Activated B cell treated with CpG ODN at 0.5 μM for 24 hours (primary cell): ENCODE measurements at regions of chr14 and their contacts with region 1.

Region 1: GRCh38 chr14:95993768-95994592 is 45.2 kb upstream of the C14orf132 start:
- DNase-seq: no peak
- ATAC-seq: peak; percentile 37
- H3K4me3 Mint-ChIP-seq: no peak overlapping the region
- H3K27ac Mint-ChIP-seq: no peak overlapping the region
- H3K4me1 Mint-ChIP-seq: no peaks in the 10 kb centered on the region
- H3K27me3 Mint-ChIP-seq: peaks cover 24% of the 10 kb centered on the region
- CTCF ChIP-seq: peak; percentile 83

Region 2: DNA sequence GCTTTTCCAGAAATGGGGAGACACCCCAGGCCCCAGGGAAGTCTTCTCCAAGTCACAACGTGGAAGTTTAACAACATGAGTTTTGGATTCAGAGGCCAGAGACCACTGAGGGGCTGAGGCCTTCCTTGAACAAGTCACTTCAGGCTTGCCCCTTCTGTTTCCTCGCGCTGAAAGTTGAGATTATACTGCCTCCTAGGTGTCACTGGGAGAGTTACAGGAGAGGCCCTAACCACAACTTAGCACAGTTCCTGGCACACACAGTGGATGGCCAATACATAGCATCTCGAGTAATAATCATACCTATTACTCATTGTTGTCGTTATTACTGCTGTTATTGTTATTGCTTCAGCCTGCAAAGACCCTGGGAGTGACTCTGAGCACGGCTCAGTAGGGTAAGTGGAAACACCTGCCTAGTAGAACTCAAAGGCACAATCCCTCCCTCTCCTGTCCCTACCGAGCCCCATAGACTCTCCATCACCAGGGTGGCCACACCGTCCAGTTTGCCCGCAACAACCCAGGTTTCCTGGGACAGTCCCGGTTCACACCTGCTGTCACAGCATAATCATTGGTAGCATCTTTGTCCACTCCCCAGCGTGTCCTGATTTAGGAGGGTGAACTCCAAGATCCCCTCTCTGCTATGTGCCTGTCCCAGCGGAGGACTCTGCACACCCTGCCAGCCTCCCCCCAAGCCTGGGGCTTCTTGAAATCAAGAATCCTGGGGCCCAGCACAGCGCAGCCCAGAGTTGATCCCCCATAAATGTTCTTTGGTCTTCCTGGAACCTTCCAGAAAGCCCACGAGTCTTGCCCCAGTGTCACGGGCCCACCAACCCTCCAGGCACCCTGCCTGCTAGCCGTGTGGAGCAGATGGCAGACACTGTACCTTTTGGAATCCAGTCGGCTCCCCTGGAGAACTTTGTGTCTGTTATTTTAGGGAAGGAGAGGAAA is 562.5 kb before region 1 on chr14:
- CTCF ChIA-PET with region 1: interaction called, 4 read pairs
- POLR2A ChIA-PET with region 1: no interaction called
- intact Hi-C with region 1: loop called (anchors 1 kb)
- DNase-seq: no peak
- ATAC-seq: peak; percentile 65
- H3K4me3 Mint-ChIP-seq: no peak overlapping the region
- H3K27ac Mint-ChIP-seq: no peak overlapping the region
- H3K4me1 Mint-ChIP-seq: peaks cover 3% of the 10 kb centered on the region
- H3K27me3 Mint-ChIP-seq: no peaks in the 10 kb centered on the region
- CTCF ChIP-seq: no peak

Region 3: DNA sequence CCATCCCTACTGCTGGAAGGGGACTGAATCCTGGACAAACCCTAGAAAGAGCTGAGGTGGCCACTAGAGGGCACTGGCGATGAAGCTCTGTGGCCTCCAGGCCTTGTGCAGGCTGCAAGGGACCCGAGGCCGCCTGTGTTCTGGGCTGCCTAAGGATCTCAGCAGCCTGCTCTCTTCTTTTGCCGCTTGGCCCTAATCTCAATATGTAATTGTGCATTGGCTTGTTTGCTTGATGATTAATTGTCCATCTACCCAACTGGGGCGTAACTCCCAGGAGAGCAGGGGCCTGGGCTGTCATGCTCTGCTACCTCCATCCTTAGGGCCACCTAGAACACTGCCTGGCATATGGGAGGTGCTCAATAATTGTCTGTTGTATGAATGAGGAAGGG is 551.4 kb before region 1 on chr14:
- CTCF ChIA-PET with region 1: interaction called, 5 read pairs
- POLR2A ChIA-PET with region 1: no interaction called
- intact Hi-C with region 1: loop called (anchors 1 kb)
- DNase-seq: peak; percentile 55
- ATAC-seq: peak; percentile 91
- H3K4me3 Mint-ChIP-seq: no peak overlapping the region
- H3K27ac Mint-ChIP-seq: peak overlapping the region; percentile 78
- H3K4me1 Mint-ChIP-seq: peaks cover 34% of the 10 kb centered on the region
- H3K27me3 Mint-ChIP-seq: no peaks in the 10 kb centered on the region
- CTCF ChIP-seq: no peak

Region 4: DNA sequence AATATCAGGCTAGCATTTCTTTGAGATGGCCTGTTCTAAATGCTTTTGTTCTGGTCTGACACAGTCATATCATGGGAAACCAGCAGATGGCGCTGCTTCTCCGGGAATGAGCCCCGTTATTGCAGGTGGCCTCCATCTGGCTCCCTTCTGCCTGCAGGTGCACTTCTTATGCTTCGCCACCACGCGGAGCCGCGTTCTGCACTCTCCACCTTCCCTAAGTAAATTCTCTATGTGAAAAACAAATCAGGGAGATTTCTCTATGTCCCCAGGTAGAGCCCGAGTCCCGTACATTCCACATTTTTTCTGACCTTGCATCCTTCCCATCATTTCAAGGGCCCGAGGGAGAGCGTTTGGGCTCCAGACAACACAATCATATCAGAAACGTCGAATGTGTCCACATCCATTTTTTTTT is 433.0 kb before region 1 on chr14:
- CTCF ChIA-PET with region 1: interaction called, 71 read pairs
- POLR2A ChIA-PET with region 1: no interaction called
- intact Hi-C with region 1: loop called (anchors 1 kb)
- DNase-seq: peak; percentile 79
- ATAC-seq: peak; percentile 100
- H3K4me3 Mint-ChIP-seq: no peak overlapping the region
- H3K27ac Mint-ChIP-seq: no peak overlapping the region
- H3K4me1 Mint-ChIP-seq: peaks cover 4% of the 10 kb centered on the region
- H3K27me3 Mint-ChIP-seq: peaks cover 17% of the 10 kb centered on the region
- CTCF ChIP-seq: peak; percentile 71

Region 5: GRCh38 chr14:95609387-95609990 is 384.5 kb before region 1 on chr14:
- CTCF ChIA-PET with region 1: interaction called, 24 read pairs
- POLR2A ChIA-PET with region 1: no interaction called
- intact Hi-C with region 1: loop called (anchors 1 kb)
- DNase-seq: no peak
- ATAC-seq: peak; percentile 34
- H3K4me3 Mint-ChIP-seq: no peak overlapping the region
- H3K27ac Mint-ChIP-seq: no peak overlapping the region
- H3K4me1 Mint-ChIP-seq: peaks cover 24% of the 10 kb centered on the region
- H3K27me3 Mint-ChIP-seq: peaks cover 32% of the 10 kb centered on the region
- CTCF ChIP-seq: no peak

Region 6: GRCh38 chr14:95697764-95698163 is 296.2 kb before region 1 on chr14:
- CTCF ChIA-PET with region 1: no interaction called
- POLR2A ChIA-PET with region 1: no interaction called
- intact Hi-C with region 1: loop called (anchors 1 kb)
- DNase-seq: no peak
- ATAC-seq: peak; percentile 64
- H3K4me3 Mint-ChIP-seq: peak overlapping the region; percentile 74
- H3K27ac Mint-ChIP-seq: peak overlapping the region; percentile 94
- H3K4me1 Mint-ChIP-seq: peaks cover 96% of the 10 kb centered on the region
- H3K27me3 Mint-ChIP-seq: peaks cover 6% of the 10 kb centered on the region
- CTCF ChIP-seq: no peak

Region 7: DNA sequence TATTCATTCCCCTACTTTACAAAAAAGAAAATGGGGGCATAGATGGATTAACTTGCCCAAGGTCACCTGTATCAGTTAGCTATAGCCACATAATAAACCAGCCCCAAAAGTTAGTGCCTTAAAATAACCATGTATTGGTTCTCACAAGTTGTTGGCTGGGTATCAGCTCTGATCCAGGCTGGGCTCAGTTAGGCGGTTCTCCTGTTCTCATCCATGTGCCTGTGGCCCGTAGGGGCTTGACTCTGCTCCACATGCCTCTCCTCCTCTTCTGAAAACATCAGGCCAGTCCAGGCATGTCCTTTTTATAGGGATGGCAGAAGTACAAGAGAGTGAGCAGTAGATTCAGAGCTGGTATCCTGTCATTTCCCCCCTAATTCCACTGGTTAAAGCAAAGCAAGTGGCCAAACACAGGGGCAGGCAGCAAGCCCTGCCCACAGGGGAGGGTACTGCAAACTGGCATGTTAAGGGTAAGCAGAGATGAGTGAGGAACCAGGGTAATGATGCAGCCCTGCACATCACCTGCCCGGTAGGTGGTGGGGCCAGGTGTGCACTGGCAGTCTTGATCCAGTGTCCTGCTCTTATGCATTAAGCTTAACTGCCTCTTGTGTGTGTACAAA is 165.2 kb before region 1 on chr14:
- CTCF ChIA-PET with region 1: no interaction called
- POLR2A ChIA-PET with region 1: no interaction called
- intact Hi-C with region 1: no loop called
- DNase-seq: no peak
- ATAC-seq: no peak
- H3K4me3 Mint-ChIP-seq: no peak overlapping the region
- H3K27ac Mint-ChIP-seq: no peak overlapping the region
- H3K4me1 Mint-ChIP-seq: no peaks in the 10 kb centered on the region
- H3K27me3 Mint-ChIP-seq: peaks cover 3% of the 10 kb centered on the region
- CTCF ChIP-seq: no peak

Region 8: DNA sequence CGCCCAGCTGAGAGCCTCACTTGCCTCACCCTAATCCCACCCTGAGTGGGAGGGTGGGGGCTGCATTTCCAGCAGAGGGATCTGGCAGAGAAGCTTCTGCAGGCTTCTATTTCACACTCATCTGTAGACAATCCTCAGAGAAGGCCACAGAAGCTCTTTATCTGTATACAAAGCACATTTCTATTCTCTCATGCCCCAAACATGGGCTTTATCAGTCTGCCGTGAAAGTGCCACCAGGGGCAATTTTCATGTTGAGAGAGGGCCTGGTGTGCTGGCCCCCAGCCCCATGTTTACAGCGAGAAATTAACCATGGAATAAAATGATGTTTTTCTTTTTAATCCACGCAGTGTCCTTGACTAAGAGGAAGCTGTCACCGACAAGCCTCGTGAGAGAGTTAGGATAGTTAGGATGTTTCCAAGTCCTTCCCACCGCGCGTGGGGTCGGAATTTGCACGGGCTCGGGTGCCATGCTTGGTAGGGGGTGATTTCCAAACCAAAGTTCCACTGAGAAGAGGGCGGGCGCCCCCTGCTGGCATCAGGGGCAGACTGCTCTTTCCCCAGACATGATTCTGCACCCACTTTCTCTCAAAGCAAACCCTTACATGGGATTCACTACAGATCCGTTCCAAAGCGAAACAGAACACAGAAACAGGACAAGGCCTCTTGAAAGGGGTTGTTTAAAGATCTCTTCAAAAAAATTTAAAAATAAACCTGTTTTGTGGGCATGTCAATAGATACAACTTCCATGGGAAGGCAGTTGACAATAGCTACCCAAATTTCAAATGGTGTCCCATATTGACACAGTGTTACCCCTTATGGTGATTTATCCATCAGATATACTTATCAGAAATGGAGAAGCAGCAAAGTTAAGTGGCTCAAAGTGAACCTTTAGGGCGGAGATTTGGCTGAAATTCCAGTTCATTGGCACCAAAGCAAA is 281.5 kb after region 1 on chr14:
- CTCF ChIA-PET with region 1: no interaction called
- POLR2A ChIA-PET with region 1: no interaction called
- intact Hi-C with region 1: loop called (anchors 2 kb)
- DNase-seq: peak; percentile 33
- ATAC-seq: no peak
- H3K4me3 Mint-ChIP-seq: no peak overlapping the region
- H3K27ac Mint-ChIP-seq: no peak overlapping the region
- H3K4me1 Mint-ChIP-seq: peaks cover 2% of the 10 kb centered on the region
- H3K27me3 Mint-ChIP-seq: no peaks in the 10 kb centered on the region
- CTCF ChIP-seq: no peak